Activated CD4-positive, alpha-beta memory T cell treated with anti-CD3 and anti-CD28 coated beads for 36 hours (primary cell): ENCODE measurements at regions of chrX and their contacts with region 1.

Region 1: DNA sequence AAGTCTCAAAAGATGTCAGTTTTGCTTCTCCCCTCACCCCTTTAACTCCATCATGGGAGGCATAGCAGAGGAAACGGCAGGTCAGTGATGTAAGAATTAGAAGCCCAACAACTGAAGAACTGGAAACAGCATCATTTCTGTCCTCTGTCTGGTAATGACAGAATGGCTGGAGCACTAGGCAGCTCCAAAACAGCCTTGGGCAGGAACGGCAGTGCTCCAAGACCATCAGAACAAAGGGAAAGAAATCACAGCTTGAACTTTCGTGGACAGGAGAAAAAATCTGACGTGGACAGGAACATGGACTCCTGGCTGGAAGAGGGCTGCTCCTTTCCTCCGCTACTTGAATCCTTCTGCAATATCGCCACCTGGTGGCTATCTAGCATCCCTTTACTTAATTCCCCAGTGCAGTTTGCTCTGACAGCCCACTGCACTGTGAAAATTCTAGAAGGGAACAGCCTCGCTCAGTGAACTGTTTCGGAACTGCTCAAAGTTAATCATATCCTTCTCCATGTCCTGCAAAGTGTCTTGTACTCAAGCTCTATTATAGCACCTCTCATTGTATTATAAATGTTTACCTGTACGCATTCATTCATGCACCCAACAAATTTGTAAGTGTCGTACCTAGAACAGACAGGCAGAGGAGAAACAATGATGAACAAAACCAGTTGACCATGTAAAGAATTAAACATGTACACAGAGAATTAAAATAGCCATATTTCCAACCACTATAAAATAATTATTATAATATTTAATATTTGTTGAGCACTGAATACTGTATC is 20.4 kb downstream of the SLC25A53 start:
- DNase-seq: peak; percentile 50
- H3K4me3 Mint-ChIP-seq: no peak overlapping the region
- H3K27ac Mint-ChIP-seq: no peak overlapping the region
- H3K4me1 Mint-ChIP-seq: peaks cover 20% of the 10 kb centered on the region
- H3K27me3 Mint-ChIP-seq: no peaks in the 10 kb centered on the region

Region 2: DNA sequence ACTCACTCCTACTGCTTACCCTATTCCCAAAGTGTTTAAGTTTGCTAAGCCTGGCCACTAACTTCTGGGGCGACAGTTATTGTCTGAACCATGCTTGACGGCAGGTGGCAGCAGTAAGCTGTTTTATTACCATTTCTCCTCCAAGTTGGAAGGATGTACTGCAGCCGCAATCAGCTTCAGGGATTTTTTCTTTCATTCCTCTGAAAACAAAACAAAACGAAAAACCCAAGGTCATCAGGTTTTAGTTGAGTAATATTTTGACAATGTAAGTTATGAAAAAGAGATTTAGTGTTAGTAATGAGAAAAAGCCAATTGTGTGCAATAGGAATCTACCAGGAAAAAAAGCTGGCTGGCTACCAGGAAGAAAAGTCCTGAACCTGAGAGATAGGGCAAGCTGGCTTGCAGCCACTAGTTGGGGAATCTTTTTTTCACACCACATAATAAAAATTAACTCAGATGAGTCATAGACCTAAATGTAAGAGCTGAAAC is 291.2 kb before region 1 on chrX:
- CTCF ChIA-PET with region 1: interaction called, 10 read pairs
- POLR2A ChIA-PET with region 1: no interaction called
- intact Hi-C with region 1: loop called (anchors 1 kb)
- DNase-seq: peak; percentile 58
- H3K4me3 Mint-ChIP-seq: no peak overlapping the region
- H3K27ac Mint-ChIP-seq: no peak overlapping the region
- H3K4me1 Mint-ChIP-seq: peaks cover 5% of the 10 kb centered on the region
- H3K27me3 Mint-ChIP-seq: no peaks in the 10 kb centered on the region

Region 3: DNA sequence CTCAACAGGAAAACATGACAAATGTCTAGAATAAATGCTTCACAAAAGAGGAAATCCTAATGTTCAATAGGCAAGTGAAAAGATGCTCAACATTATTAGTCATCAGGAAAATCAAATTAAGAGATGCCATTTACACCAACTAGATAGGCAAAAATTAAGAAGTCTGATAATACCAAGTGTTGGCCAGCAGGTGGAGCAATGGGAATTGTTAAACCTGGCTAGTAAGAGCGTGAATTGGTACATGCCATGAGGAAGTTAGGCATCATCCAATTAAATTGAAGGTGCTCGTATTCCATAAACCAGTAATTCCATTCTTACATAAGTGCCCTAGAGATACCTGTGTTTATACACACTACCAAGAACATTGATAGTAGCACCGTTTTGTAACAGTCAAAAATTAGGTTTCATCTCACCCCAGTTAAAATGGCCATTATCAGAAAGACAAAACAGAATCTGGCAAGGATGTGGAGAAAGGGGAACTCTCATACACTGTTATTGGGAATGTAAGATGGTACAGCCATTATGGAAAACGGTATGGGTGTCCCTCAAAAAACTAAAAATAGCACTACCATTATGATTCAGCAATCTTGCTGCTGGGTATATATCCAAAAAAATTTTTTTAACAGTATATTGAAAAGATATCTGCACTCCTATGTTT is 38.1 kb before region 1 on chrX:
- CTCF ChIA-PET with region 1: interaction called, 48 read pairs
- POLR2A ChIA-PET with region 1: no interaction called
- intact Hi-C with region 1: loop called (anchors 1 kb)
- DNase-seq: peak; percentile 48
- H3K4me3 Mint-ChIP-seq: no peak overlapping the region
- H3K27ac Mint-ChIP-seq: no peak overlapping the region
- H3K4me1 Mint-ChIP-seq: peaks cover 2% of the 10 kb centered on the region
- H3K27me3 Mint-ChIP-seq: no peaks in the 10 kb centered on the region

Region 4: GRCh38 chrX:104113222-104113965 is 23.0 kb before region 1 on chrX:
- CTCF ChIA-PET with region 1: interaction called, 14 read pairs
- POLR2A ChIA-PET with region 1: no interaction called
- intact Hi-C with region 1: no loop called
- DNase-seq: peak; percentile 70
- H3K4me3 Mint-ChIP-seq: peak overlapping the region; percentile 79
- H3K27ac Mint-ChIP-seq: peak overlapping the region; percentile 49
- H3K4me1 Mint-ChIP-seq: peaks cover 44% of the 10 kb centered on the region
- H3K27me3 Mint-ChIP-seq: no peaks in the 10 kb centered on the region

Region 5: DNA sequence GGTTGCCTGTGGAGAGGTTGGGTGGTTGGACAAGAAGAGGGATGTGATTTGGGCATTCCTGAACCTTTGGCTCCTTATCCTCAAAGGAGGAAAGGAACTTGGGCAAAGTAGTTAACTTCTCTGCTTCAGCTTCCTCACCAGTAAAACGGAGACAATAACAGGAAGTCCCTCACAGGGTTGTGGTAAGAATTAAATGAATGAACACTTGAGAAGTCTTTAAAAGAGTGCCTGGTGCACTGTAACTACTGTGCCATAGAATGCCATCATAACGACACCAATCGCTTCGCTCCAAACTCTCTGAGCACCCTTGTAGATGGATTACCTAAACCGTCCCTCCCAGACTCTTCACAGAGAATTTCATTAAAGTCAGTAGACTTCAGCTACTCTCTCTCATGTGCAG is 13.6 kb before region 1 on chrX:
- CTCF ChIA-PET with region 1: interaction called, 11 read pairs
- POLR2A ChIA-PET with region 1: no interaction called
- intact Hi-C with region 1: no loop called
- DNase-seq: peak; percentile 14
- H3K4me3 Mint-ChIP-seq: no peak overlapping the region
- H3K27ac Mint-ChIP-seq: no peak overlapping the region
- H3K4me1 Mint-ChIP-seq: peaks cover 27% of the 10 kb centered on the region
- H3K27me3 Mint-ChIP-seq: no peaks in the 10 kb centered on the region